ENCODE measurements at regions of chr1 and their contacts with region 1.

Region 1: GRCh38 chr1:116983142-116983541 is 18.4 kb upstream of the CD101 start:
- DNase-seq: no peak
- H3K4me3 ChIP-seq: no peak overlapping the region
- H3K27ac ChIP-seq: no peak overlapping the region
- H3K4me1 ChIP-seq: no peaks in the 10 kb centered on the region
- H3K27me3 ChIP-seq: no peaks in the 10 kb centered on the region
- CTCF ChIP-seq: no peak

Region 2: GRCh38 chr1:116288201-116288761 is 694.9 kb before region 1 on chr1:
- CTCF ChIA-PET with region 1: no interaction called
- POLR2A ChIA-PET with region 1: no interaction called
- intact Hi-C with region 1: no loop called
- DNase-seq: no peak
- H3K4me3 ChIP-seq: no peak overlapping the region
- H3K27ac ChIP-seq: no peak overlapping the region
- H3K4me1 ChIP-seq: peaks cover 42% of the 10 kb centered on the region
- H3K27me3 ChIP-seq: no peaks in the 10 kb centered on the region
- CTCF ChIP-seq: no peak

Region 3: GRCh38 chr1:116320874-116321273 is 662.3 kb before region 1 on chr1:
- CTCF ChIA-PET with region 1: interaction called, 10 read pairs
- POLR2A ChIA-PET with region 1: no interaction called
- intact Hi-C with region 1: no loop called
- DNase-seq: no peak
- H3K4me3 ChIP-seq: no peak overlapping the region
- H3K27ac ChIP-seq: no peak overlapping the region
- H3K4me1 ChIP-seq: peaks cover 7% of the 10 kb centered on the region; the same call in 1 of the 2 replicates
- H3K27me3 ChIP-seq: no peaks in the 10 kb centered on the region
- CTCF ChIP-seq: no peak

Region 4: GRCh38 chr1:116902032-116902738 is 81.0 kb before region 1 on chr1:
- CTCF ChIA-PET with region 1: no interaction called
- POLR2A ChIA-PET with region 1: no interaction called
- intact Hi-C with region 1: no loop called
- DNase-seq: no peak
- H3K4me3 ChIP-seq: no peak overlapping the region
- H3K27ac ChIP-seq: no peak overlapping the region
- H3K4me1 ChIP-seq: peaks cover 10% of the 10 kb centered on the region
- H3K27me3 ChIP-seq: no peaks in the 10 kb centered on the region
- CTCF ChIP-seq: no peak

Measured in PC-9 (cell line).